Lower leg skin (tissue), 4 donors: ENCODE measurements at regions of chr19 and their contacts with region 1.

Region 1: GRCh38 chr19:4870025-4870700 is 2.7 kb upstream of the PLIN3 start:
- DNase-seq: peak in 1 of 2 donors; percentile 47
- H3K4me3 ChIP-seq: no peak overlapping the region
- CTCF ChIP-seq: peak in 1 of 3 donors; percentile 32
- POLR2A ChIP-seq: no peak

Region 2: GRCh38 chr19:4723367-4724187 is 146.6 kb before region 1 on chr19 and contains the start of gene DPP9:
- intact Hi-C with region 1: no loop called
- DNase-seq: peak; percentile 98 to 99
- H3K4me3 ChIP-seq: peak within 1 kb of the TSS; percentile 73
- CTCF ChIP-seq: peak in 1 of 3 donors; percentile 82
- POLR2A ChIP-seq: no peak
- total RNA-seq, gene DPP9: 76.7 to 125 (median 86.6) TPM

Region 3: GRCh38 chr19:4909897-4910593 is 39.9 kb after region 1 on chr19:
- intact Hi-C with region 1: loop called (anchors 5 kb)
- DNase-seq: peak; percentile 87 to 98
- H3K4me3 ChIP-seq: peak overlapping the region; percentile 55
- CTCF ChIP-seq: no peak
- POLR2A ChIP-seq: no peak

Region 4: GRCh38 chr19:5031231-5032100 is 161.3 kb after region 1 on chr19:
- intact Hi-C with region 1: loop called (anchors 5 kb)
- DNase-seq: peak; percentile 78 to 97
- H3K4me3 ChIP-seq: no peak overlapping the region
- CTCF ChIP-seq: peak in 1 of 3 donors; percentile 81
- POLR2A ChIP-seq: no peak